CD8-positive, alpha-beta T cell (primary cell): ENCODE measurements at regions of chr13 and their contacts with region 1.

Region 1: GRCh38 chr13:62407871-62408270 is 992.2 kb upstream of the PCDH20 start:
- DNase-seq: no peak
- ATAC-seq: no peak
- H3K4me3 ChIP-seq: no peak overlapping the region
- H3K4me3 Mint-ChIP-seq: no peak overlapping the region
- H3K27ac ChIP-seq: no peak overlapping the region
- H3K27ac Mint-ChIP-seq: no peak overlapping the region
- H3K4me1 ChIP-seq: no peaks in the 10 kb centered on the region
- H3K4me1 Mint-ChIP-seq: no peaks in the 10 kb centered on the region
- H3K27me3 ChIP-seq: no peaks in the 10 kb centered on the region
- H3K27me3 Mint-ChIP-seq: no peaks in the 10 kb centered on the region
- CTCF ChIP-seq: no peak

Region 2: GRCh38 chr13:62357887-62358645 is 49.8 kb before region 1 on chr13:
- CTCF ChIA-PET with region 1: no interaction called
- POLR2A ChIA-PET with region 1: no interaction called
- intact Hi-C with region 1: loop called in 1 of 2 experiments (anchors 5 kb)
- DNase-seq: no peak
- ATAC-seq: no peak
- H3K4me3 ChIP-seq: no peak overlapping the region
- H3K4me3 Mint-ChIP-seq: no peak overlapping the region
- H3K27ac ChIP-seq: no peak overlapping the region
- H3K27ac Mint-ChIP-seq: no peak overlapping the region
- H3K4me1 ChIP-seq: no peaks in the 10 kb centered on the region
- H3K4me1 Mint-ChIP-seq: no peaks in the 10 kb centered on the region
- H3K27me3 ChIP-seq: no peaks in the 10 kb centered on the region
- H3K27me3 Mint-ChIP-seq: no peaks in the 10 kb centered on the region
- CTCF ChIP-seq: no peak

Region 3: GRCh38 chr13:62418872-62419271 is 11.0 kb after region 1 on chr13:
- CTCF ChIA-PET with region 1: no interaction called
- POLR2A ChIA-PET with region 1: no interaction called
- intact Hi-C with region 1: no loop called
- DNase-seq: no peak
- ATAC-seq: no peak
- H3K4me3 ChIP-seq: no peak overlapping the region
- H3K4me3 Mint-ChIP-seq: no peak overlapping the region
- H3K27ac ChIP-seq: no peak overlapping the region
- H3K27ac Mint-ChIP-seq: no peak overlapping the region
- H3K4me1 ChIP-seq: no peaks in the 10 kb centered on the region
- H3K4me1 Mint-ChIP-seq: no peaks in the 10 kb centered on the region
- H3K27me3 ChIP-seq: no peaks in the 10 kb centered on the region
- H3K27me3 Mint-ChIP-seq: no peaks in the 10 kb centered on the region
- CTCF ChIP-seq: no peak